Motor neuron (in vitro differentiated cells): ENCODE measurements at regions of chr3 and their contacts with region 1.

Region 1: DNA sequence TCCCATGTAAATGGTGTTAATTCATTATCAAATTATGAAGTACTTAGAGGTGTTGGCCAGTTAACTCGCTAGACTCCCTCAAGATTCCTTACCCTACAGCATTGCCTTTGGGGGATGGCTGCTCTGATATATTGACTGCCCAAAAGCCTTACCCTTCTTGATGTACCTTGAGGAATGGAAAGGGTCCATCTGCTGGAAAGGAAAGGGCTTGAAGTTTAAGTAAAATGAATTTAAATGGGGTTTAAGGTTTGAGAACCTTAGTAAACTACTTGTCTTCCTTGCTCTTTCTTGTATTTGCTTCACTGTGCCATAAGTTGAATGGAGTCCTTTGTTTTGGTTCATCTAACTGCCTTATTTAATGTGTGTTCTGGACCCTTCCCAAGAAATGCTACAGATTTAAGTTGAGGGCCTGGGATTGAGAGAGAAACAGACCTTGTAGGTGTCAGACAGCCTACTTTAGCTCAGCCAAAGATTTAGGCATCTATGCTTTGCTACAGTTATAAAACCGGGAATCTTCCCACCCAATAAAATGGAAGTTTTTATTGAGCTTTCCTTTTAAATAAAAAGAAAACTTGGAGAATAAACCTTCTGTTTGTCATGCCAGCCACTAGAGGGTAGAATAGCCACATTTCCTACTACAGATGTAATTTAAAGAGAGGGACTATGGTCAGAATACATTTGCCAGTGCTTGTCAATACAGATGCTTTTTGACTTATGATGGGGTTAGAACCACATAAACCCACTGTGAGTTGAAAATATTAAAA is 25.3 kb downstream of the CMSS1 start:
- ATAC-seq: peak; percentile 61 to 81 (median 76)
- H3K4me3 ChIP-seq: no peak overlapping the region
- H3K27ac ChIP-seq: no peak overlapping the region
- H3K4me1 ChIP-seq: peaks cover 14 to 17% of the 10 kb centered on the region in 2 donors

Region 2: DNA sequence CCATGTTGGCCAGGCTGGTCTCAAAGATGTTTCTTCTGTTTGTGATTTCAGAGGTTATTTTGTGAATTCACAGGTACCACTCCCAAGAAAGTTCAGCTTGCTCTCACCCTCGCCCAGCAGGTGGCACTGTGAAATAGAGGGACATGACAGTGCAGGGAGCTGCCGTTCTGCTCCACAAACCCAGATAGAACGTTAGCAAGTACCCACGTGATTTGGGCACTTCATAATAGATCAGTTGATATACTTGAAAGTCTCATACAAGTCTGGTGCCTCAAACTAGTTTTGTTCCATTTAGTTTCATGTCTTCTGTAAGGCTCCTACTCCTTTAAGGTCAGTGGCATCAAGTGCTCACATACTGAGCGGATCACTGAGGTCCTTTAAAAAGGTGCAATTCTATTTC is 225.8 kb after region 1 on chr3:
- in situ Hi-C with region 1: loop called in 2 of 9 experiments (anchors 25 kb)
- ATAC-seq: peak in 6 of 8 experiments; percentile 20 to 99 (median 82)
- H3K4me3 ChIP-seq: no peak overlapping the region
- H3K27ac ChIP-seq: no peak overlapping the region
- H3K4me1 ChIP-seq: peaks cover 1 to 7% of the 10 kb centered on the region in 2 donors

Region 3: DNA sequence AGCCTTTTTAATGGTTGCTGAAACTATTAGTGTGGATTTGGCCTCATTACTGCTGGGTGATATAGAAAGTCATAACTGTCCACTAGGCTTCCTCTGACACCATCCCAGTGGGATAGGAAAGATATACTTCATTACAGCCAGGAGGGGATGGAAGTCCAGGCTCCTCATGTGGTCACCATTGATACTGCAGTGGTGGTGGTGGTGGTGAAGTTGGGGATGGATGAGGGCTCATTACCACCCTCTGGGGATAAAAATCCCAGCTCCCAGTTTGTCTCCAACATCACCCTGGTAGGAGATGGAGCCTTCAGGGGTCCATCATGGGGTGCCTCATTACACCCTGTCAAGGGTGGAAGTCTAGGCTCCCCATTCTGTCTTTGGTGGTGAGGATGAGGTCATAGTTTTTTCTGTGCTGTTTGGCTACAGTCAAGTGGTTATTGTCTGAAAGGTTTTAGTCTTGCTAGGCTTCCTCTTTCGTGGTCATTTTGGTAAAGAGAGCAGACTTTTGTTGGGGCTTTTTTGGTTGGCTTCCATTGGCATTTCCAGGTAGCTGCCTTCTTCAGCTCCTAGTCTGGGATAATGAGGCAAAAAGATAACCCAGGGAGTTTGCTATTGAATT is 301.4 kb after region 1 on chr3:
- in situ Hi-C with region 1: no loop called
- ATAC-seq: no peak
- H3K4me3 ChIP-seq: no peak overlapping the region
- H3K27ac ChIP-seq: no peak overlapping the region
- H3K4me1 ChIP-seq: no peaks in the 10 kb centered on the region

Region 4: DNA sequence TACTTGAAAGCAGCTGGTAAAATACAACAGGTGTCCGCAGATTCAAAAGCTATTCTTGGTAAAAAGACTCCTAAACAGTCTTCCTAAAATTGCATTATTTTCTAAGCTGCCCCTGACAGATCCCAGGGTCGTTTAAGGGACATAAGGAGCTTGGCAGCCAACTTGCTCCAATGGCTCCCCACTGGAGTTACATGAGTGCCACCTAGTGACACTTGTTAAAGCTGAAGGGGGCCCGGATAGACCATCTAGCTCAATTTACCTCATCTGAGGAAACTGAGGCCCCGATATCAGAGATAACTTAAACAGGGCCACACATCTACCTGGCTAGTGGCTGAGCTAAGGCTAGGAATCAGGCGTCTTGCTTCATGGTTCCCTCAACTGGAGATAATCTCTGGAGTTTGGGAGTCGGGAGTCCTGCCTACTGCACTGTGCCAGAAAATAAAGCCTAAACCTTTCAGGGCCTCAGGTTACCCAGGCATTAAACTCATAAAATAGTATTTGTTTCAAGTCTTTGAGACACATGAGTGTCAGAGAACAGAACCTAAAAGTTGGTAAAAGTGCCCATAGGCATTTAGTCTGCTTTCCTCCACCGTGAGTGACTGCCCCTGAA is 411.3 kb after region 1 on chr3:
- in situ Hi-C with region 1: loop called in 7 of 9 experiments (anchors 10 to 25 kb)
- ATAC-seq: peak; percentile 84 to 100 (median 90)
- H3K4me3 ChIP-seq: no peak overlapping the region
- H3K27ac ChIP-seq: no peak overlapping the region
- H3K4me1 ChIP-seq: no peaks in the 10 kb centered on the region

Region 5: GRCh38 chr3:100260685-100261484 is 417.9 kb after region 1 on chr3 and contains the start of gene TBC1D23:
- in situ Hi-C with region 1: loop called in 7 of 9 experiments (anchors 10 to 25 kb)
- ATAC-seq: peak; percentile 96 to 100 (median 99)
- H3K4me3 ChIP-seq: peak within 1 kb of the TSS; percentile 82 to 97 (median 89)
- H3K27ac ChIP-seq: peak within 1 kb of the TSS; percentile 93 to 98
- H3K4me1 ChIP-seq: peaks cover 10 to 16% of the 10 kb centered on the region in 2 donors
- total RNA-seq, gene TBC1D23: 24.5 to 52.3 (median 40.4) TPM

Region 6: GRCh38 chr3:100590114-100590839 is 747.3 kb after region 1 on chr3:
- in situ Hi-C with region 1: loop called in 1 of 9 experiments (anchors 25 kb)
- ATAC-seq: peak; percentile 73 to 86 (median 77)
- H3K4me3 ChIP-seq: peak overlapping the region in 1 of 5 donors; percentile 9
- H3K27ac ChIP-seq: no peak overlapping the region
- H3K4me1 ChIP-seq: no peaks in the 10 kb centered on the region